Caco-2 (cell line): ENCODE measurements at regions of chr18 and their contacts with region 1.

Region 1: DNA sequence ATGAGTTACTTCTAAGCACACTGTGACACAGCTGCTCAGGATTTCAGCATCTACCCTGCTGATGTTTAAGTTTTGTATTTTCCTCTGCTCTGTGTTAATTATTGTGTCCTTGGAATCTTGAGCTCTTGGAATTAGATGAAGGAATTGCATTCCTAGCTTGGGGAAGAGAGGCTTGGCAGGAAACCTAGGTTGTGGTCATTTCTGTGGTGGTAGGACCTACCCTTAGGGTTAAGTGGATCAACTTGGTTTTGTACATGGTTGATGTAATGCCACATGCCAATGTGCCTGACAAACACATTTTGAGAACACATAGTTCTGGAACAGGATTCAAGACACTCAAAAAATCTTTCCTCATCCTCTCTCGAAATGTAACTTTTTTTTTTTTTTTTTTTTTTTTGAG is 264.5 kb upstream of the MEX3C start:
- DNase-seq: no peak
- H3K4me3 ChIP-seq: no peak overlapping the region
- H3K4me3 Mint-ChIP-seq: no peak overlapping the region
- H3K27ac Mint-ChIP-seq: no peak overlapping the region
- H3K4me1 ChIP-seq: peaks cover 6% of the 10 kb centered on the region; the same call in 1 of the 2 replicates
- H3K4me1 Mint-ChIP-seq: peaks cover 6% of the 10 kb centered on the region
- H3K27me3 ChIP-seq: no peaks in the 10 kb centered on the region
- H3K27me3 Mint-ChIP-seq: peaks cover 3% of the 10 kb centered on the region
- CTCF ChIP-seq: no peak

Region 2: DNA sequence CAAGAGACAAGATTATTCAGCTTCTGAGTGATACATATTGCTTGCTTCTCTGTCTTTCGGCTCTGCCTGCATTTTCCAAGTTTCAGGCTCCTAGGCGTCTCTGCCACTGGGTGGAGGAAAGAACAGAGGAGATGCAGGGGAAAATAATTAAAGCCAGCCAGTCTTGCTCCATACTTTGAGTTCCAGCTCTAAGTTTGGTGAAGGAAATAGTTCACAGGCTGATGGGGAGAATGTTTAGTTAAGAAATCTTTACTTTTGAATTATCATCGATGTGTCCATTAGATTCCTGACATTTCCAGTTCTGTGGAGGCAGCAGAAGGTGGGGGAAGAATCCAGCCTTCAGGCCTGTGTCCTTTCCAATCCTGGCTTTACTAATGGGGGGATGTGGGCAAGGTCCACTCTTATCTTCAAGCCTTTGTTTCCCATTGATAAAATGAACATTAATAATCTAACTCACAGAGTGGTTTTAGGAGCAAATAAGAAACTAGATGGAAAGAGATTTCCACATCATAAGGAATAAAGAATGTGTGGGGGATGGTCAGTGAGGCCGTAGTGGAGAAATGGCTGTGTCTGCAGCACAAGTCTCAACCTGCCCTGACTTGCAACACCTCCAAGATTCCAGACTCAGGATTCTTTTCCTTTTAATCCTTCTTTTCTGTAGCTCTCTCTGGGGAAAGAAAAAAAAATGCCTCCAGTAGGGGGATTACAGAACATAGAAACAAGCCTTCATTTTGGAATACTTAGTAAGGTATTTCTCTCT is 140.4 kb before region 1 on chr18:
- CTCF ChIA-PET with region 1: no interaction called
- POLR2A ChIA-PET with region 1: no interaction called
- intact Hi-C with region 1: loop called (anchors 5 kb)
- DNase-seq: peak; percentile 68 to 74
- H3K4me3 ChIP-seq: no peak overlapping the region
- H3K4me3 Mint-ChIP-seq: no peak overlapping the region
- H3K27ac Mint-ChIP-seq: peak overlapping the region; percentile 72
- H3K4me1 ChIP-seq: peaks cover 25% of the 10 kb centered on the region
- H3K4me1 Mint-ChIP-seq: peaks cover 14% of the 10 kb centered on the region
- H3K27me3 ChIP-seq: no peaks in the 10 kb centered on the region
- H3K27me3 Mint-ChIP-seq: no peaks in the 10 kb centered on the region
- CTCF ChIP-seq: no peak

Region 3: DNA sequence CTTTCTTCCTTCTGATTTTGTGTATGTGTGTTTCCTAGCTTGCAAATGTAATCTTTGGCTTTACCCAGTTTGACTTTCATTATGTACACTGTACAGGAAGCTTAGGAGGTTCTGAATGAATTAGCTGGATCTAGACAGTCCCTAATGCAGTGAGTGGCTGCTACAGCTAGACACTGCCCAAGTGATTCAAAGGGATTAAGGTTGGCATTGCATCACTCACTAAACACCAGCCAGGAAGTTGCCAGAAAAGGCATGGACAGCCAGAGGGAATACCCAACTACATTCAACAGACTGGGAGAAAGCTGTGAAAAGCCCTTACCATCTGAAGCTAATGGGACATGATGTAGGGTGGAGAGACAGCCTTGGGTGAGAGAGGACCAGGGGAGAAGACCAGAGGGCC is 51.6 kb after region 1 on chr18:
- CTCF ChIA-PET with region 1: no interaction called
- POLR2A ChIA-PET with region 1: no interaction called
- intact Hi-C with region 1: no loop called
- DNase-seq: no peak
- H3K4me3 ChIP-seq: no peak overlapping the region
- H3K4me3 Mint-ChIP-seq: no peak overlapping the region
- H3K27ac Mint-ChIP-seq: peak overlapping the region; percentile 42
- H3K4me1 ChIP-seq: no peaks in the 10 kb centered on the region
- H3K4me1 Mint-ChIP-seq: no peaks in the 10 kb centered on the region
- H3K27me3 ChIP-seq: no peaks in the 10 kb centered on the region
- H3K27me3 Mint-ChIP-seq: no peaks in the 10 kb centered on the region
- CTCF ChIP-seq: no peak